GM10248 (cell line): ENCODE measurements at regions of chr1 and their contacts with region 1.

Region 1: DNA sequence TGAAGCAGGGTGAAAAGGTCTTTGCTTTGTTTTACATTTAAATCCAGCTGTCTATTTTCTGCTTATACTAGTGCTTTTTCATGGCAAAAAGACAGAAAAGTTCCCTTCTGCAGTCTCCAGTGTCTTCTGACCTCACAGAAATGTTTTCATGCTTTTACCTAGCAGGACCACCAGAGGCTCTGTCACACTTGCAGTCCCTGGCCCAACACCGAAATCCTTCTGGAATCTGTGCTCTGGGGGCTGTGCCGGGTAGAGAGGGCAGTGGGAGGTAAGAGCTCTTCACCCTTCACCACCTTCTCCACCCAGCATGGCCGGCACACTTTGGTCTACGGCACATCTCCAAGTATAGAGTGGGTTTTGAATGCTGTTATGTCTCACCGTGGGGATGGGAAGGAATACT is 20.8 kb downstream of the GNAT2 start:
- DNase-seq: no peak
- CTCF ChIP-seq: no peak

Region 2: DNA sequence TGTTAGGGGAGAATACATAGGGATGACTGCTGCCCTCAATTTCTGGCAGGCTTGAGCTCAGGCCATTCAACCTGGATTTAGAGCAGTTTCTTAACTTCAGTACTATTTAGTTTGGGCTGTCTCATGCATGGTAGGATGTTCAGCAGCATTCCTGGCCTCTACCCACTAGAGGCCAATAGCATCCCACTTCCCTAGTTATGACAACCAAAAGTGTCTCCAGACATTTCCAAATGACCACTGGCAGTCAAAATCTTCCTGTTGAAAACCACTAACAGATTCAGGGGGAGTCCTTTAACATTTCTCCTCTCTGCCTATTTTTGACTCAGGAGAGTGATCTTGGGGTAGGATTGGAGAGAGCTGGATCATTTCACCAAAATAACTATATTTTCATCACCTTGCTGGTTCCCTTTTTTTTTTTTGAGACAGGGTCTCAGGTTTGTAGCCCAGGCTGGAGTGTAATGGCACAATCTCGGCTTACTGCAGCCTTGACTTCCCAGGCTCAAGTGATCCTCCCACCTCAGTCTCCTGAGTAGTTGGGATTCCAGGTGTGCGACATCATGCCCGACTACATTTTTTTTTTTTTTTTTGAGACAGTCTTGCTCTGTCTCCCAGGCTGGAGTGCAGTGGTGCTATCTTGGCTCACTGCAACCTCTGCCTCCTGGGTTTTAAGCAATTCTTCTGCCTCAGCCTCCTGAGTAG is 12.1 kb after region 1 on chr1:
- CTCF ChIA-PET with region 1: interaction called, 18 read pairs
- POLR2A ChIA-PET with region 1: interaction called, 3 read pairs
- DNase-seq: no peak
- CTCF ChIP-seq: no peak